ENCODE measurements at regions of chr6 and their contacts with region 1.

Region 1: DNA sequence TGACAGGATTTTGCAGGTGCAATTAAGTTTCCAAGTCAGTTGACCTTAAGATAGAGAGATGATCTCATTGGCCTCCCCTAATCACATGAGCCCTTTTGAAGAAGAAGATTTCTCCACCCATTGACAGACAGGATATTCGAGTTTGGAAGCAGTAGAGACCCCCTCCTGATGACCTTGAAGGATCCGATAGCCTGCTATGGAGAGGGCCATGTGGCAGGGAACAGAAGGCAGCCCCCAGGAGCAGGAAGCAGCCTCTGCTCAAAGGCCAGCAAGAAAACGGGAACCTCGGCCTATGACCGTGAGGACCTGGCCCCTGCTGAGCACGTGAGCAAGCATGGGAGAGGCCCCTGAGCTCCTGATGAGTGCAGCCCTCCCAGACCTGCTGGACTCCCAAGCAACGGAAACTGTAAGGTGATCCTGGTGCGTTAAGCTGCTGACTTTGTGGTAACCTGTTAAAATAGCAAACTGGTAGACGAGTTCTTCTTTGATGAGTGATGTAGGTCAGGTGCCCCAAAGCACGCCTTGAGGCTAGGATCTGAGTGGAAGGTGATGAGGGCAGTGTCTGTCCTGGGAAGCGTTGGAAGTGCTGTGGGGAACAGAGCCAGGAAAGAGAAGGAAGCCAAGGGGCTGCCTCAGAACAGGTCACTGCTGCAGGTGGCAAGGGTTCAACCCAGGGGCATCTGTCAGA is 18.5 kb upstream of the TUBB2A start:
- DNase-seq: no peak
- H3K4me3 ChIP-seq: no peak overlapping the region
- H3K27ac ChIP-seq: no peak overlapping the region
- H3K4me1 ChIP-seq: peaks cover 7% of the 10 kb centered on the region
- H3K27me3 ChIP-seq: no peaks in the 10 kb centered on the region
- CTCF ChIP-seq: no peak

Region 2: DNA sequence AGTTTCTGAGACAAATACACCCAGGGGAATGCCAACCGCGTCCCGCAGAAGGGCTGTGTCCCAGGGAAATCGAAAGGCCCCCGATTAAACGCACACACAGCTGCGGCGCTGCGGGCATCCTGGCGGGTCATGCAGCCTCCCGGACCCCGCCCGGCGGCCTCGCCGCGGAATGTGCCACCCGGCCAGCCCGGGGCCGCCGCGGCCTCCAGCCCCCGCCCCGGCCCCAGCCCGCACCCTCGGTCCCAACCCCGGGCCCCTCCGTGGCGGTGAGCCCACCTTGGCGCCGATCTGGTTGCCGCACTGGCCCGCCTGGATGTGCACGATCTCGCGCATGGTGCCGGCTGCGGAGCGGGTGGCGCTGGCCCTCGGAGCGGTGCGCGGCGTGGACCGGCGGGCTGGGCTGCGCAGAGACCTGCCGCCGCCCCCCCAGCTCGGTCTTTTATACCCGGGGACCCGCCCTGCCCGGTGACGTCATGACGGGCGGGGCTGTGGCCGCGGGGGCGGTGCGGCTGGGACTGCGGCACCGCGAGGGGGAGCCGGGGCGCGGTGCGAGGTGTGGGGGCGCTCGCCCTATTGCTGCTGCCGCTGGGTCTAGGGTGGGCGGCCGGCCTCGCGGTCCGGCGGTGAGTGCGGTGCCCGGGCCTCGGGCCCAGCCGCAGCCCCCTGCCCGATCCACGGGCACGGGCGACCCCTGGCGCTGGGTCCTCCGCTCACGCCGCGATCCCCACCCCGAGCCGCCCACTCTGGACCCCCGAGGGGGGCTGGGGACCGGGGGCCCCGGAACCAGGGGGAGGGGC is 18.5 kb before region 1 on chr6 and contains the start of gene TUBB2A:
- CTCF ChIA-PET with region 1: no interaction called
- dilution Hi-C with region 1: no loop called
- in situ Hi-C with region 1: no loop called
- intact Hi-C with region 1: loop called (anchors 1 kb)
- DNase-seq: peak; percentile 80
- H3K4me3 ChIP-seq: peak within 1 kb of the TSS; percentile 74 to 92 (median 81)
- H3K27ac ChIP-seq: peak within 1 kb of the TSS; percentile 80
- H3K4me1 ChIP-seq: peaks cover 5% of the 10 kb centered on the region
- H3K27me3 ChIP-seq: no peaks in the 10 kb centered on the region
- CTCF ChIP-seq: peak; percentile 14 to 55
- total RNA-seq, gene TUBB2A: 70.2 to 214 TPM

Region 3: DNA sequence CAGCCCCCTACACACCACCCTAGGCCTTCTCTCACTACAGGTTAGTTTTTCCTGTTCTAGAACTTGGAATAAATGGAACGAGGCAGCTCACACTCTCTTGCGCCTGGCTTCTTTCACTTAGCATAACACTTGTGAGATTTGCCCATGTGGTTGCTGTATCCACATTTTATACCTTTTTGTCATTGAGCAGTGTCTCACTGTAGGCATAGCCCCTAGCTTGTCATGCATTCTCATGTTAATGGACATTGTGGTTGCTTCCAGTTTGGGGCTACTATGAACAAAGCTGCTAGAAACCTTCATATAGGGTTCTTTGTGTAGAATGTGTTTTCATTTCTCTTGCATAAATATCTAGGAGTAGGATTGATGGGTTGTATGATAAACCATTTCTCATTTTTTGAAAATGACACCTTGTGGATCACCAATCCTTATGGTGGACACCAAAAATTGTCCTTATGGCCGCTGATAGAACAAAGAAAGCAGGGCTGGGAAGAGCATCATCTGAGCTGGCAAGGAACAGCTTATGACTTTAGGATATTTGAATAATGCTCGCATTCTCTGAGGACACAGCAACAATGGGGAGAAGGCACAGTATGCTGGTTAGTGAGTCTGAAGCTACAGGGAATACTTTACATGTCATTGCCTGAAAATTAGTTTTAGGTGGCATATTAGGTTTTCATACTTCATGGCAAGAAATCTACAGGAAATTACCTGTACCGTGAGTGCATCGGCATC is 290.8 kb after region 1 on chr6:
- CTCF ChIA-PET with region 1: no interaction called
- dilution Hi-C with region 1: no loop called
- in situ Hi-C with region 1: no loop called
- intact Hi-C with region 1: no loop called
- DNase-seq: no peak
- H3K4me3 ChIP-seq: no peak overlapping the region
- H3K27ac ChIP-seq: no peak overlapping the region
- H3K4me1 ChIP-seq: no peaks in the 10 kb centered on the region
- H3K27me3 ChIP-seq: no peaks in the 10 kb centered on the region
- CTCF ChIP-seq: no peak

Measured in mammary epithelial cell (primary cell).